ENCODE measurements at regions of chr19 and their contacts with region 1.

Region 1: DNA sequence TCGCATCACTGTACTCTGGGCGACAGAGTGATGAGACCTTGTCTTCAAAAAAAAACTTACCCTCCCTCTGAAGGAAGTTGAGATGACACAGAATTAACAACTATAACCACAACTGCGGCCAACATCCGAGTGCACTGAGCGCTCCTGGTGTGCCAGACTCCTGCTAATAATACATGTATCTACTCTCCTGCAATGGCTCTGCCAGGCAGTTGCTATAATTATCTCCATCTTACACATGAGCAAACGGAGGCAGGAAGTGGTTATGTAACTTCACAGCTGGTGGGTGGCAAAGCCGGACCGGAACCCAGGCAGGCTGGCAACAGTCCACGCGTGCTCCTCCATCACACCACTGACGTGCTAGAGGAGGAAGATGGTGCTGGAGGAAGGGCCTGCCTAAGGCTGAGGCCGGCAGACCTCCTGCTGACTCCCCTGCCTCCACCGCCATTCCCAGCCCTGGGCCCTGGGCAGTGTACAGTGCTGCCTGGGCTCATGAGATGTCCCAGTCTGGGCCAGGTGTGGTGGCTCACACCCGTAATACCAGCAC is 12.6 kb downstream of the XRCC1 start:
- DNase-seq: peak; percentile 81 to 93
- ATAC-seq: peak; percentile 88 to 96 (median 92)
- H3K4me3 ChIP-seq: no peak overlapping the region
- H3K4me3 Mint-ChIP-seq: peak overlapping the region; percentile 83
- H3K27ac ChIP-seq: peak overlapping the region; percentile 96
- H3K27ac Mint-ChIP-seq: peak overlapping the region; percentile 89 to 96
- H3K4me1 ChIP-seq: peaks cover 44% of the 10 kb centered on the region
- H3K4me1 Mint-ChIP-seq: peaks cover 50 to 54% of the 10 kb centered on the region in 2 donors
- H3K27me3 ChIP-seq: no peaks in the 10 kb centered on the region
- H3K27me3 Mint-ChIP-seq: no peaks in the 10 kb centered on the region
- CTCF ChIP-seq: no peak

Region 2: GRCh38 chr19:43532962-43533545 is 29.7 kb before region 1 on chr19 and contains the start of gene ZNF575:
- intact Hi-C with region 1: loop called (anchors 2 kb)
- DNase-seq: peak; percentile 68 to 92
- ATAC-seq: peak; percentile 39 to 64 (median 54)
- H3K4me3 ChIP-seq: peak within 1 kb of the TSS; percentile 78
- H3K4me3 Mint-ChIP-seq: peak within 1 kb of the TSS; percentile 97
- H3K27ac ChIP-seq: peak within 1 kb of the TSS; percentile 77
- H3K27ac Mint-ChIP-seq: peak within 1 kb of the TSS; percentile 90 to 93
- H3K4me1 ChIP-seq: peaks cover 23% of the 10 kb centered on the region
- H3K4me1 Mint-ChIP-seq: peaks cover 30 to 34% of the 10 kb centered on the region in 2 donors
- H3K27me3 ChIP-seq: no peaks in the 10 kb centered on the region
- H3K27me3 Mint-ChIP-seq: no peaks in the 10 kb centered on the region
- CTCF ChIP-seq: no peak
- total RNA-seq, gene ZNF575: 1.9 to 5.4 (median 3.9) TPM